ENCODE measurements at regions of chr10 and their contacts with region 1.

Region 1: GRCh38 chr10:6569259-6569658 is 10.8 kb downstream of the PRKCQ start:
- DNase-seq: no peak
- H3K4me3 ChIP-seq: no peak overlapping the region
- CTCF ChIP-seq: no peak

Region 2: DNA sequence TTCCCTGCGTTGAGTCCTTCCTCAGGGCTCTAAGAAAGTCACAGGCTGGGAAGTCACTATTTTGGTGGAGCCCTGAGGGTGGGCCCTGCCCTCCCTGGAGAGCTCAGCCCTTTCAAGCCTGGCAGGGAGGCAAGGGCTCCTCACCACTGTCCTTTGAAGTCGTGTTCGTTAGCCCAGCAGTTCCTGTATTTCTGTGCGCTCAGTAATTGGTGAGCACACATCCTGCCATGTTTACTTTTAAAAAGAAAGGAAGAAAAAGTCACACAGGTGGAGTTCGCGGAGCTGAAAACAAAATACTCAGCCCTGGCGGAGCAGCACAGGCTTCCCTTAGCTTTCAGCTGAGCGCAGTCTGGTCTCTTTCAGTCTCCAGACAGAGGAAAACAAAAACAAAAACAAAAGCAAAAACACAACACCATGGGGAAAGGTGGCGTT is 26.2 kb before region 1 on chr10:
- CTCF ChIA-PET with region 1: no interaction called
- POLR2A ChIA-PET with region 1: no interaction called
- DNase-seq: no peak
- H3K4me3 ChIP-seq: no peak overlapping the region
- CTCF ChIP-seq: no peak

Region 3: DNA sequence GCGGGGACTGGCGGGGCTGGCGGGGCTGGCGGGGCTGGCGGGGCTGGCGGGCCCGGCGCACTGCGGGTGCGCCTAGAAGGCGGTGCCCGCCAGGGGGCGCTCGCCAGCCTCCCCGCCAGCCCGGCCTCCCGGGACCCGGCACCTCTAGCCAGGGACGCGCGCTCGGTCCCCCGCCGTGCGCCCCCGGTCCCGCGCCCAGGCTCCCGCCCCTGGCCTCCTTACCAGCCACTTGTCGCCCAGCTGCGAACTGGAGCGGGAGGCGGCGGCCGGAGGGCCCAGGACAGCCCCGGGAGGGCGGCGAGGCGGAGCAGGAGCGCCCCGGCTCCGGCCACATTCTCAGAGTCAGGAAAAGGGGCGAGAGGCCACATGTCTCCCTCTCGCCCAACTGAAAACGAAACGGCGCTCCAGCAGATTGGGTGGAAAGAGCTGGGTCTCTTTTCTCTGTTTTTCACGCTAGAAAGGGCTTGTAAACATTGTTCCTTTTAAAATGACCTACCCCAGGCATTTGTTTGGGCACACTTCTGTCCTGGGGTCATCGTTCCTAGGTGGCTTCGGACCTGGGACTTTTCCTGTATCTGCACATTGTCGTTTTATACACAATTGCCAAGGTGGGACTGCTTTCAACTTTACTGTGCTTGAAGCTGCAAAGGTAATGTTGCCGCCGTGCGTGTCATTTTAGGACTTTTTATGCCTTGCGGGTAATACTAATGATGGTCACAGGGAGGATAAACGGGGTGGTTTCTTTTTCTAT is 11.2 kb after region 1 on chr10:
- CTCF ChIA-PET with region 1: interaction called, 11 read pairs
- POLR2A ChIA-PET with region 1: no interaction called
- DNase-seq: no peak
- H3K4me3 ChIP-seq: peak overlapping the region; percentile 63
- CTCF ChIP-seq: peak; percentile 62